Mammary epithelial cell (primary cell): ENCODE measurements at regions of chr10 and their contacts with region 1.

Region 1: DNA sequence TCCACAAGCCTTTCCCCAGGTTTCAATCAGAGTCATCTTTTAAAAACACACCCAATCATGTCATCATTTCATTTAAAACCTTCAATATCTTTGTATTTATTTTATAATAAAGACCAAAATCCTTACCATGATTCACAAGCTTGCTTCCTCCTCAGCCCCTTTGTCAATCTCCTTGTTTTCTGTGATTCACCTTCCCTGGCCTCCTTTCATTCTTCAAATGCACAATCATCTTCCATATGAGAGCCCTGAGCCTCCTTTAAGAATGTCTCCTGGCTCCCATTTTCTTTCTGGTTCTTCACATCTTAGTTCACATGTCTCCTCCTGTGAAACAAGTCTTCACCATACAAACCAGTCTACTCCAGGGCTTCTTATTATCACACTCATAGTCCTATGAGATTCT is 904.0 kb downstream of the SORCS3 start:
- DNase-seq: no peak
- H3K4me3 ChIP-seq: no peak overlapping the region
- H3K27ac ChIP-seq: no peak overlapping the region
- H3K4me1 ChIP-seq: no peaks in the 10 kb centered on the region
- H3K27me3 ChIP-seq: no peaks in the 10 kb centered on the region
- CTCF ChIP-seq: no peak

Region 2: GRCh38 chr10:105473170-105473569 is 71.9 kb before region 1 on chr10:
- CTCF ChIA-PET with region 1: no interaction called
- dilution Hi-C with region 1: loop called (anchors 5 kb)
- in situ Hi-C with region 1: no loop called
- intact Hi-C with region 1: no loop called
- DNase-seq: no peak
- H3K4me3 ChIP-seq: no peak overlapping the region
- H3K27ac ChIP-seq: no peak overlapping the region
- H3K4me1 ChIP-seq: no peaks in the 10 kb centered on the region
- H3K27me3 ChIP-seq: no peaks in the 10 kb centered on the region
- CTCF ChIP-seq: no peak

Region 3: DNA sequence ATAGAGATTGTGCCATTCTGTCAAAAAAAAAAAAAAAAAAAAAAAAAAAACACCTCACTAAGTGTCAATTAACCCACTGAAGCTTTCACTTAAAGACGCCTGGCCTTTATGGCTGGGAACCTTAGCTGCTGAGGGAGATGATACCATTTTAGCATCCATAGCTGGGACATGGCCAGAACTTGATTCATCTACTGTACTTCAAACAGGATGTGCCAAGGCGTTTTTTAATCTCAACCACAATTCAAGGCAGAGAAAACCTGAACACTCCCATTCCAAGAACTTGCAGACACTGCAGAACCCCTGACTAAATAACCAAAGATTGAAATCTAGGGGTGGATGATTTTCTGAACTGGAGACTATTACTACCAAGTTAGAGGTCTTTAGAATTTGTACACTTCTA is 622.8 kb after region 1 on chr10:
- CTCF ChIA-PET with region 1: no interaction called
- dilution Hi-C with region 1: no loop called
- in situ Hi-C with region 1: no loop called
- intact Hi-C with region 1: no loop called
- DNase-seq: no peak
- H3K4me3 ChIP-seq: no peak overlapping the region
- H3K27ac ChIP-seq: no peak overlapping the region
- H3K4me1 ChIP-seq: no peaks in the 10 kb centered on the region
- H3K27me3 ChIP-seq: no peaks in the 10 kb centered on the region
- CTCF ChIP-seq: no peak

Region 4: GRCh38 chr10:106198275-106198674 is 653.2 kb after region 1 on chr10:
- CTCF ChIA-PET with region 1: no interaction called
- dilution Hi-C with region 1: no loop called
- in situ Hi-C with region 1: no loop called
- intact Hi-C with region 1: no loop called
- DNase-seq: no peak
- H3K4me3 ChIP-seq: no peak overlapping the region
- H3K27ac ChIP-seq: no peak overlapping the region
- H3K4me1 ChIP-seq: no peaks in the 10 kb centered on the region
- H3K27me3 ChIP-seq: no peaks in the 10 kb centered on the region
- CTCF ChIP-seq: no peak